ENCODE measurements at regions of chr6 and their contacts with region 1.

Region 1: DNA sequence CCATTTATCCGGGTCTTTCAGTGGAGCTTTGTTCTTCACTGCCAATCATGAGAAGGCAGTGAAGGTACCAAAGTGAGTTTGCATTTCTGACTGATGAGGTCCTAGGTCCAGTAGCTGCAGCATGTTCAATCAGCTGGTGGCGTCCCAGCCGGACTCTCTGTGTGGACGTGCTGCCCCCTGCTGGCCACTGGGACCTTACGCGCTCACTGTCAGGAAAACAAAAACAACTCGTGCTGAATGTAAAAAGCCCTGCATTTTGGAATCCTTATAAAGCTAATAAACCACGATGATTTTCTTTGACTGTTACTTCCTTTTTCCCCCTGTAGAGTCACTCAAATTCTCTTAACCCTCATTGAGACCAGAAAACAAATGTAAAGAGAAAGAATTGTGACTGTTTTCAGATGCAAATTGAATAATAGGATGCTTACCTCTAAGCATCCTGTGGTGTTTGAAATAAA is 4.9 kb upstream of the CD24 start:
- DNase-seq: peak; percentile 55 to 83
- ATAC-seq: peak; percentile 12 to 74; a peak in 3 of 6 replicates
- H3K4me3 ChIP-seq: no peak overlapping the region
- H3K27ac ChIP-seq: peak overlapping the region; percentile 27 to 61; a peak in 3 of 6 replicates
- H3K4me1 ChIP-seq: peaks cover 12% of the 10 kb centered on the region
- CTCF ChIP-seq: peak; percentile 91
- EP300 ChIP-seq: no peak
- POLR2A ChIP-seq: no peak
- RAD21 ChIP-seq: peak; percentile 95 to 96

Region 2: DNA sequence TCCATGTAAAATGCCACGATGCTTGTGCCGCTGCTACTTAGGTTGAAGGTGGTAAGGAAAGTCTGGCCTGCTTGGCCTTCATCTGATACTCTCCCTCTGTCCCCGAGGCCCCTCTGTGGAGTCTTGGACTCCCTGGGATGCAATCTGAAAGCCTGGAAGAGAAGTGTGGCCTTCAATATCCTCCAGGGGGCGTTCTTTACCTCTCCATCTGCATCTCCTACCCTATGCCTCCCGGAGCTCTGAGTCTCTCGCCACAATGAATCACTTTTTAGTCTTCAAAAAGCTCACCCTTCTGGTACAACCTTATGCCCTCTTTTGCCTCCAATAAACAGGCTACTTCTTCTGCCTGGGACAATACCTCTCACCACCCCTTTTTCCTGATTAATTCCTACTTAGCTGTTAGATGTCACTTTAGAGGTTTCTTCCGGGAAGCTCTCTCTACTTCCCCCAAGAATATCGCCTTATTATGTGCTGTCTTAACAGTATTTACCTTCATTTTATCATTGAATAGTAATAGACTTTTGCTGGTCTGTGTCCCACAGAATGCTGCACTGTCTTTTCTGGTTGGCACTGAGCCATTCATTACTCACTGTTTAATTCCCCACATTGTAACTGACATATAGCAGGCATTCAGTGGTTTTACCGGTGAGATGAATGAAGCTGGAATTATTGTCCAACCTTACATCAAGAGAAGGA is 640.0 kb before region 1 on chr6:
- CTCF ChIA-PET with region 1: interaction called, 12 read pairs
- POLR2A ChIA-PET with region 1: no interaction called
- DNase-seq: peak; percentile 56 to 86
- ATAC-seq: peak; percentile 99
- H3K4me3 ChIP-seq: peak overlapping the region; percentile 28; the same call in 2 of the 3 replicates
- H3K27ac ChIP-seq: peak overlapping the region in 1 of 2 experiments; percentile 30; a peak in 2 of 6 replicates
- H3K4me1 ChIP-seq: no peaks in the 10 kb centered on the region
- CTCF ChIP-seq: peak; percentile 71
- EP300 ChIP-seq: no peak
- POLR2A ChIP-seq: no peak
- RAD21 ChIP-seq: peak; percentile 64

Region 3: GRCh38 chr6:106444777-106445507 is 534.5 kb before region 1 on chr6:
- CTCF ChIA-PET with region 1: interaction called, 17 read pairs
- POLR2A ChIA-PET with region 1: no interaction called
- DNase-seq: peak; percentile 63 to 66
- ATAC-seq: peak; percentile 78 to 86
- H3K4me3 ChIP-seq: no peak overlapping the region
- H3K27ac ChIP-seq: no peak overlapping the region
- H3K4me1 ChIP-seq: peaks cover 16% of the 10 kb centered on the region
- CTCF ChIP-seq: peak; percentile 68
- EP300 ChIP-seq: no peak
- POLR2A ChIP-seq: no peak
- RAD21 ChIP-seq: peak; percentile 73

Region 4: DNA sequence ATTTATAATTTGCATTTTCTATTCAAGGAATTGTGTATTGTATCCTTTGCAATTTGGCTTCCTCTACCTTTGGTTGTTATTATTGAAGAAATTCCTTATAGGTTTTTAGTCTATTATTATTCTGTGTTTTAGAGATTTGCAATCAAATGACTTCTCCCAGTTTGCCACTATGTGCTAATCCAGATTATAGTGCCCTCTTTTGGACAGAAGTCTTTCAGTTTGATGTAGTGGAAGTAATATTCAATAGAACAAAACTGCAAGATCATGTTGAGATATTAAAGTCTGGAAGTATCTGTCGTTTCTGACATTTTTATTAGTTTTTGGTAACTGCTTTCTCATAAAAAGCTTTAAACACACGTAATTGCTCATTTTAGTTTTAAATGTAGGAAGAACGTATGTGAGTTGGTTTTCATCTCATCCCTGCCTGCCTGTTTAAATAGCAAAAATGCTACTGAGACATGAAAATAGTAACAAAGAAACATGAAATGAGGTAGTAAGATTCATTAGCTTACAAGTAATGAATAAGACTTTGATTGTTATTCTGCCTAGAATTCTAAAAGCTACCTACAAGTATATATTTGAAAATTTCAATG is 423.0 kb before region 1 on chr6:
- CTCF ChIA-PET with region 1: interaction called, 11 read pairs
- POLR2A ChIA-PET with region 1: no interaction called
- DNase-seq: peak in 1 of 2 experiments; percentile 26
- ATAC-seq: peak in 1 of 2 experiments; percentile 30; a peak in 1 of 6 replicates
- H3K4me3 ChIP-seq: no peak overlapping the region
- H3K27ac ChIP-seq: no peak overlapping the region
- H3K4me1 ChIP-seq: peaks cover 29% of the 10 kb centered on the region
- CTCF ChIP-seq: peak; percentile 49
- EP300 ChIP-seq: no peak
- POLR2A ChIP-seq: no peak
- RAD21 ChIP-seq: peak; percentile 61 to 62

Region 5: DNA sequence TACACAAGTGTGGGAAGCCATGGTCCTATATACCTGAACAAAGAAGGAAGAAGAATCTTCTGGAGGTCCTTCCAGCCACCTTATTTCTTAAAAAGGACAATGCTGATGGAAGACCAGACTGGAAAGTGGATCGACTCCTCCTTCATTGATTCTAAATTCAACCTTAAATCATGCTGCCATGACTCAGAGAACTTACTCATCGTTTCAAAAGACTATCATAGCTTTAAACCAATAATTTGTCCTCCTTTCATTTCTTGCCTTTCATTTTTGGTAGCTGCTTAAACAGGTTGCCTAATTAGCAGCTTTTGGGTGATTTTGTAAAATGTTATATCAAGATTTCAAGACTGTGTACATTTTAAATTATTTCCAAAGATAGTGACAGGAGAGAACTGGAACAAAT is 410.9 kb before region 1 on chr6:
- CTCF ChIA-PET with region 1: interaction called, 14 read pairs
- POLR2A ChIA-PET with region 1: no interaction called
- DNase-seq: no peak
- ATAC-seq: no peak
- H3K4me3 ChIP-seq: no peak overlapping the region
- H3K27ac ChIP-seq: peak overlapping the region in 1 of 2 experiments; percentile 57; a peak in 2 of 6 replicates
- H3K4me1 ChIP-seq: peaks cover 10% of the 10 kb centered on the region
- CTCF ChIP-seq: no peak
- EP300 ChIP-seq: no peak
- POLR2A ChIP-seq: no peak
- RAD21 ChIP-seq: no peak

Region 6: GRCh38 chr6:106608062-106608668 is 371.3 kb before region 1 on chr6:
- CTCF ChIA-PET with region 1: interaction called, 39 read pairs
- POLR2A ChIA-PET with region 1: no interaction called
- DNase-seq: peak; percentile 15 to 61
- ATAC-seq: peak in 1 of 2 experiments; percentile 77; a peak in 3 of 6 replicates
- H3K4me3 ChIP-seq: no peak overlapping the region
- H3K27ac ChIP-seq: no peak overlapping the region
- H3K4me1 ChIP-seq: no peaks in the 10 kb centered on the region
- CTCF ChIP-seq: peak; percentile 38; the same call in 2 of the 3 replicates
- EP300 ChIP-seq: no peak
- POLR2A ChIP-seq: no peak
- RAD21 ChIP-seq: peak; percentile 10 to 36; a peak in 1 of 5 replicates

Region 7: DNA sequence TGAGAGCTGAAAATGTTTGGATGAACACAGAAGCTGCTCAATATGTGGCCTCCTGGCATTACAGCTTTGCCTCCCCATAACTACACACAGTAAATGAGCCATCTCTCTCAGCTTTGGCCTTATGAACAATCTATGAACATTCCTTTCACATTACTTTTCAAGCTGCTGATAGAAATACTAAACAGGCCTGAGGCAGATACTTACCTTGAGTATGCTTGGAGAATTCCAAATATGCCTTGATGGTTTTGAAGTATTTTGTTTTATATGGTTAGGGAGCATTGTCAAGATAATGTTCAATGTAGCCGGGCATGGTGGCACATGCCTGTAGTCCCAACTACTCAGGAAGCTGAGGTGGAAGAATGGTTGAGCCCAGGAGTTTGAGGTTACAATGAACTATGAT is 109.4 kb before region 1 on chr6:
- CTCF ChIA-PET with region 1: no interaction called
- POLR2A ChIA-PET with region 1: no interaction called
- DNase-seq: peak; percentile 17 to 34
- ATAC-seq: peak; percentile 57 to 77; a peak in 3 of 6 replicates
- H3K4me3 ChIP-seq: no peak overlapping the region
- H3K27ac ChIP-seq: peak overlapping the region; percentile 64 to 81
- H3K4me1 ChIP-seq: peaks cover 37% of the 10 kb centered on the region
- CTCF ChIP-seq: no peak
- EP300 ChIP-seq: peak in 1 of 2 experiments; percentile 41; a peak in 1 of 5 replicates
- POLR2A ChIP-seq: no peak
- RAD21 ChIP-seq: no peak

Measured in A549 (cell line).